Natural killer cell (primary cell): ENCODE measurements at regions of chr12 and their contacts with region 1.

Region 1: DNA sequence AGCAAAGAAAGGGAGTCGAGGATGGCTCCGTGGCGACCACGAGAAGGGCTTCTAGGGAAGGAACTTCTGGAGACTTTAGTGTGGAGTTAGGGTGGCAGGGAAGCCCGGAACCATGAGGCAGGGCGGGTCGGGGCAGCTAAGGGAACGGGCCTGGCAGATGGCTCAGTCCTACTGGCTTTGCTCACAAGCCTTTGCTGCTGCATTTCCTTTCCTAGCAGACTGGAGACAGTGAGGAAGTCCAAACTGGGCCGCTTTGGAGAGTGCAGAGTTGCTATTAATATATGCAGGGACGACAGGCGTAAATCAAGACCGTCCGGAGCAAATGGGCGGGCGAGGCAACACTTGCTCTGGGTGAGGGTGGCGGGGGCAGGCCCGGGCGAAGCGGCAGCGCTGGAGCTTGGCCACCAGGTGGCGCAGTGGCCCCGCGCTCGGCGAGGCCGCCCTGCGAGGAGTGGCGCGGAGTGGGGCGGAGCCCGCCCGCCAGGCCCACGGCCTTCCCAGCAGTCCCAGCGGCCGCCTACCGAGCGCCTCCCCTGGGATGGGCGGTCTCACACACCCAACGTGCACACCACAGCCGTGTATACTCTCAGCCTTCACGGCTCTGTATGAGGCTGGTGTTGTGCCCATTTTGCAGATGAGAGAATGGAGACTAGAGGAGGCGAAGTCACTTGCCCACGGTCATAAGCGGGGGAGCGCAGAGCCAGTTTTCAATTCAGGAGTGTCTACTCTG is 24.4 kb upstream of the LRTM2 start:
- DNase-seq: peak; percentile 92 to 97
- ATAC-seq: peak; percentile 89 to 97 (median 95)
- H3K4me3 ChIP-seq: peak overlapping the region; percentile 75
- H3K4me3 Mint-ChIP-seq: peak overlapping the region; percentile 90
- H3K27ac ChIP-seq: peak overlapping the region; percentile 75
- H3K27ac Mint-ChIP-seq: peak overlapping the region; percentile 72 to 83
- H3K4me1 ChIP-seq: peaks cover 29% of the 10 kb centered on the region
- H3K4me1 Mint-ChIP-seq: peaks cover 16 to 24% of the 10 kb centered on the region in 2 donors
- H3K27me3 ChIP-seq: no peaks in the 10 kb centered on the region
- H3K27me3 Mint-ChIP-seq: no peaks in the 10 kb centered on the region
- CTCF ChIP-seq: peak; percentile 89

Region 2: DNA sequence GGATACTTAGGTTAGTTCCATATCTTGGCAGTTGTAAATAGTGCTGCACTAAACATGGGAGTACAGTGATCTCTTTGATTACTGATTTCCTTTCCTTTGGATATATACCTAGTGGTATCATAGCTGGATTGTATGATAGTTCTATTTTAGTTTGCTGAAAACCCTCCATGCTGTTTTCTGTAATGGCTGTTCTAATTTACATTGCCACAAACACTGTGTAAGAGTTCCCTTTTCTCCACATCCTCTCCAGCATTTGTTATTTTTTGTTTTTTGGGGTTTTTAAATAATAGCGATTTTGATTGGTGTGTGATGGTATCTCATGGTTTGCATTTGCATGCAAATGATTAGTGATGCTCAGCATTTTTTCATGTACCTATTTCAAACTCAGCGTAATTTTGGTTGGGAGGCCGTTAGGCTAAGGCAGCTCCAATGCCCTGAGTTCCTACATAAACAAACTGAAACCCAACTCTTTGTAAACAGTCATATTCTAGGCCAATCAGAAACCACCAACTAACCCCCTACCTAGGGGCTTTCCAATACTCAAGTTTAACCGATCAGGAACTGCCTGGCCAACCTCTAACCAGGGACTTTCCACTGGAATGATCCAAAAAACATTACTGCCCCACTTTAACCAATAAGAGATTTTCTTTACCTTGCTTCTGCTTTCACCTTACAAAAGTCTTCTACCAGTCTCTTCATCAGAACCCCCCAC is 373.2 kb before region 1 on chr12:
- intact Hi-C with region 1: no loop called
- DNase-seq: peak in 1 of 2 donors; percentile 53
- ATAC-seq: peak in 1 of 3 donors; percentile 45
- H3K4me3 ChIP-seq: no peak overlapping the region
- H3K4me3 Mint-ChIP-seq: no peak overlapping the region
- H3K27ac ChIP-seq: no peak overlapping the region
- H3K27ac Mint-ChIP-seq: no peak overlapping the region
- H3K4me1 ChIP-seq: no peaks in the 10 kb centered on the region
- H3K4me1 Mint-ChIP-seq: peaks cover 0 to 6% of the 10 kb centered on the region in 2 donors
- H3K27me3 ChIP-seq: no peaks in the 10 kb centered on the region
- H3K27me3 Mint-ChIP-seq: no peaks in the 10 kb centered on the region
- CTCF ChIP-seq: no peak

Region 3: GRCh38 chr12:1634590-1635191 is 161.3 kb before region 1 on chr12:
- intact Hi-C with region 1: loop called (anchors 1 kb)
- DNase-seq: peak; percentile 45 to 76
- ATAC-seq: peak; percentile 73 to 80 (median 80)
- H3K4me3 ChIP-seq: no peak overlapping the region
- H3K4me3 Mint-ChIP-seq: no peak overlapping the region
- H3K27ac ChIP-seq: no peak overlapping the region
- H3K27ac Mint-ChIP-seq: no peak overlapping the region
- H3K4me1 ChIP-seq: peaks cover 15% of the 10 kb centered on the region
- H3K4me1 Mint-ChIP-seq: peaks cover 0 to 14% of the 10 kb centered on the region in 2 donors
- H3K27me3 ChIP-seq: peaks cover 17% of the 10 kb centered on the region
- H3K27me3 Mint-ChIP-seq: peaks cover 35 to 55% of the 10 kb centered on the region in 2 donors
- CTCF ChIP-seq: peak; percentile 63

Region 4: GRCh38 chr12:1651946-1652345 is 144.0 kb before region 1 on chr12:
- intact Hi-C with region 1: loop called (anchors 1 kb)
- DNase-seq: no peak
- ATAC-seq: no peak
- H3K4me3 ChIP-seq: no peak overlapping the region
- H3K4me3 Mint-ChIP-seq: no peak overlapping the region
- H3K27ac ChIP-seq: no peak overlapping the region
- H3K27ac Mint-ChIP-seq: no peak overlapping the region
- H3K4me1 ChIP-seq: peaks cover under 1% of the 10 kb centered on the region
- H3K4me1 Mint-ChIP-seq: no peaks in the 10 kb centered on the region
- H3K27me3 ChIP-seq: no peaks in the 10 kb centered on the region
- H3K27me3 Mint-ChIP-seq: peaks cover 12 to 17% of the 10 kb centered on the region in 2 donors
- CTCF ChIP-seq: no peak

Region 5: GRCh38 chr12:1820191-1820895 is 24.4 kb after region 1 on chr12 and contains the start of gene LRTM2:
- intact Hi-C with region 1: no loop called
- DNase-seq: no peak
- ATAC-seq: no peak
- H3K4me3 ChIP-seq: no peak within 1 kb of the TSS
- H3K4me3 Mint-ChIP-seq: no peak within 1 kb of the TSS
- H3K27ac ChIP-seq: no peak within 1 kb of the TSS
- H3K27ac Mint-ChIP-seq: no peak within 1 kb of the TSS
- H3K4me1 ChIP-seq: no peaks in the 10 kb centered on the region
- H3K4me1 Mint-ChIP-seq: peaks cover 0 to 13% of the 10 kb centered on the region in 2 donors
- H3K27me3 ChIP-seq: peaks cover 9% of the 10 kb centered on the region
- H3K27me3 Mint-ChIP-seq: peaks cover 21 to 31% of the 10 kb centered on the region in 2 donors
- CTCF ChIP-seq: no peak
- total RNA-seq, gene LRTM2: not detected

Region 6: DNA sequence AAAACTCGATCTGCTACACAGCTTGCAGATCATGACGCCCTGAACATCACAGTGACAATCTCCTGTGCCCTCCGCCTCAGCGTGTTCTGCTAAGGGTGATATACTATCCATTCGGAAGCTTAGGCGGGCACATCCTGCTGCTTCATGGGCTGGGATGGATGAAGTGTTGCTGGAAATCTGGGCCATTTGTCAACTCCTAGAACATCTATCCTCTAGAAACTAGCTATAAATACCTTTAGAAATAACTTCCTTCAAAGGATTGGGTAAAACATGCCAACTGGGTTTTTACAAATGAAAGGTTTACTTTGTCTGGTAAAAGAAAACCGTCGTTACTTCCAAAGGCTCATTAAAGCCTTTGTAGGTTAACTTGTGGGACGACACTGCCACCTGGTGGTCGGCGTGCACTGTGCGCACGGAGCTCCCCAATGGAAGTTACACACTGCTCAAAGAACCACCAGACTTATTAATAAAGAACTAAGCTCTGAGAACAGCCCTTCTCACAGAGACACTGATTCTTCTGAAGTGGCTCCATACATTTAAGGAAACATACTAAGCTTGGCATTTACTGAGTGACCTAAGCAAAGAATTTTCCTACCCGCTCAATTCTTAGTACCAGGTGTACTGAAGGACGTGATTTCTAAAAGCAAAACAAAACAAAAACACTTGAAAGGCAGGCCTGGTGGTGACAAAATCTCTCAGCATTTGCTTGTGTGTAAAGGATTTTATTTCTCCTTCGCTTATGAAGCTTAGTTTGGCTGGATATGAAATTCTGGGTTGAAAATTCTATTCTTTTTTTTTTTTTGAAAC is 144.1 kb after region 1 on chr12:
- intact Hi-C with region 1: loop called (anchors 1 kb)
- DNase-seq: peak; percentile 85 to 94
- ATAC-seq: peak; percentile 95 to 100 (median 99)
- H3K4me3 ChIP-seq: no peak overlapping the region
- H3K4me3 Mint-ChIP-seq: no peak overlapping the region
- H3K27ac ChIP-seq: no peak overlapping the region
- H3K27ac Mint-ChIP-seq: no peak overlapping the region
- H3K4me1 ChIP-seq: peaks cover 5% of the 10 kb centered on the region
- H3K4me1 Mint-ChIP-seq: peaks cover 5% of the 10 kb centered on the region in 2 donors
- H3K27me3 ChIP-seq: no peaks in the 10 kb centered on the region
- H3K27me3 Mint-ChIP-seq: peaks cover 0 to 2% of the 10 kb centered on the region in 2 donors
- CTCF ChIP-seq: peak; percentile 95

Region 7: DNA sequence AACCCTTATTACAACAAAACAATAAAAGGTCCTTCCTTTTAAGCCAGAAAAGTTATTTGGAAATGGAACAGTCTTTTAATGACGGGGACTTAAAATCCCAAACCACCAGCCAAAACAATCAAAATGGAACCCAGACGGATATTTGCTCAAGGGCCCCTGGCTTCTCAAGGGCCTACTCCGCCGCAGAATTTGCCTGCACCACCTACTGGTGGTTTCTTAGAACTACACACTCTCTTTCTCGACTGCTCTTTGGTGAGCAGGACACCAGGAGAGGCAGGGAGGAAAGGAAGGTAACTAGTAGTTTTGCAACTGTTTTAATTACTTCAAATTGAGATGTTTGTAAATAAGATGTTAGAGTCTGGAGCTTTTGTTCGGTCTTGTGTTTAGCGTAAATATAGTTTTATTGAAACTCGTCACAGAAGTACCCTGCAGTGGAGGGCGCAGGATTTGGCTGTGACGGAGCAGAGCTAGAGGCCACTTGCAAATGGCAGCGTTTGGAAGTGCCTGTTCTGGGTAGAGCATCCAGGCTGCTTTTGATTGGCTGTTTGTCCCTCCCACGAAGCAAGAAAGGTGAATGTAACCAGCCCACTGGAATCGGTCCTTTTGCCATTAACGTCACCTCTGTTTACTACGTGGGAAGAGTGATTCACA is 495.4 kb after region 1 on chr12:
- intact Hi-C with region 1: loop called (anchors 5 kb)
- DNase-seq: peak in 1 of 2 donors; percentile 62
- ATAC-seq: peak in 2 of 3 donors; percentile 45 to 66
- H3K4me3 ChIP-seq: no peak overlapping the region
- H3K4me3 Mint-ChIP-seq: no peak overlapping the region
- H3K27ac ChIP-seq: no peak overlapping the region
- H3K27ac Mint-ChIP-seq: no peak overlapping the region
- H3K4me1 ChIP-seq: peaks cover 10% of the 10 kb centered on the region
- H3K4me1 Mint-ChIP-seq: peaks cover 0 to 8% of the 10 kb centered on the region in 2 donors
- H3K27me3 ChIP-seq: no peaks in the 10 kb centered on the region
- H3K27me3 Mint-ChIP-seq: peaks cover 0 to 8% of the 10 kb centered on the region in 2 donors
- CTCF ChIP-seq: peak; percentile 78